Activated CD4-positive, alpha-beta T cell treated with anti-CD3 and anti-CD28 coated beads, Interleukin-2, amount 10 ng/mL, durations not matched to agents 24 days and 14 days (primary cell): ENCODE measurements at regions of chr6 and their contacts with region 1.

Region 1: GRCh38 chr6:26097268-26097875 is 10.1 kb downstream of the HFE start:
- DNase-seq: peak; percentile 91
- H3K4me3 Mint-ChIP-seq: no peak overlapping the region
- H3K27ac Mint-ChIP-seq: no peak overlapping the region
- H3K4me1 Mint-ChIP-seq: peaks cover 12% of the 10 kb centered on the region
- H3K27me3 Mint-ChIP-seq: peaks cover 10% of the 10 kb centered on the region

Region 2: GRCh38 chr6:26065952-26066380 is 31.4 kb before region 1 on chr6:
- intact Hi-C with region 1: loop called (anchors 1 kb)
- DNase-seq: peak; percentile 89
- H3K4me3 Mint-ChIP-seq: no peak overlapping the region
- H3K27ac Mint-ChIP-seq: peak overlapping the region; percentile 2
- H3K4me1 Mint-ChIP-seq: peaks cover 4% of the 10 kb centered on the region
- H3K27me3 Mint-ChIP-seq: peaks cover 34% of the 10 kb centered on the region